Activated naive CD4-positive, alpha-beta T cell treated with anti-CD3 and anti-CD28 coated beads for 36 hours (primary cell): ENCODE measurements at regions of chr6 and their contacts with region 1.

Region 1: GRCh38 chr6:50816115-50816675 is 2.5 kb upstream of the TFAP2B start:
- DNase-seq: peak; percentile 79
- H3K4me3 Mint-ChIP-seq: peak overlapping the region; percentile 79
- H3K27ac Mint-ChIP-seq: no peak overlapping the region
- H3K4me1 Mint-ChIP-seq: peaks cover 14% of the 10 kb centered on the region
- H3K27me3 Mint-ChIP-seq: peaks cover 68% of the 10 kb centered on the region

Region 2: GRCh38 chr6:50843842-50844241 is 27.6 kb after region 1 on chr6:
- CTCF ChIA-PET with region 1: no interaction called
- intact Hi-C with region 1: loop called (anchors 2 kb)
- DNase-seq: no peak
- H3K4me3 Mint-ChIP-seq: no peak overlapping the region
- H3K27ac Mint-ChIP-seq: no peak overlapping the region
- H3K4me1 Mint-ChIP-seq: no peaks in the 10 kb centered on the region
- H3K27me3 Mint-ChIP-seq: peaks cover 80% of the 10 kb centered on the region

Region 3: GRCh38 chr6:51753635-51754034 is 937.4 kb after region 1 on chr6:
- CTCF ChIA-PET with region 1: no interaction called
- intact Hi-C with region 1: loop called (anchors 5 kb)
- DNase-seq: peak; percentile 15
- H3K4me3 Mint-ChIP-seq: no peak overlapping the region
- H3K27ac Mint-ChIP-seq: no peak overlapping the region
- H3K4me1 Mint-ChIP-seq: no peaks in the 10 kb centered on the region
- H3K27me3 Mint-ChIP-seq: no peaks in the 10 kb centered on the region

Region 4: GRCh38 chr6:51959744-51960383 is 1143.7 kb after region 1 on chr6:
- CTCF ChIA-PET with region 1: no interaction called
- intact Hi-C with region 1: loop called (anchors 1 kb)
- DNase-seq: peak; percentile 75
- H3K4me3 Mint-ChIP-seq: no peak overlapping the region
- H3K27ac Mint-ChIP-seq: no peak overlapping the region
- H3K4me1 Mint-ChIP-seq: no peaks in the 10 kb centered on the region
- H3K27me3 Mint-ChIP-seq: peaks cover 15% of the 10 kb centered on the region

Region 5: GRCh38 chr6:52049252-52050050 is 1233.3 kb after region 1 on chr6:
- CTCF ChIA-PET with region 1: no interaction called
- intact Hi-C with region 1: loop called (anchors 1 kb)
- DNase-seq: peak; percentile 25
- H3K4me3 Mint-ChIP-seq: no peak overlapping the region
- H3K27ac Mint-ChIP-seq: no peak overlapping the region
- H3K4me1 Mint-ChIP-seq: no peaks in the 10 kb centered on the region
- H3K27me3 Mint-ChIP-seq: peaks cover 4% of the 10 kb centered on the region